Activated CD4-positive, alpha-beta memory T cell treated with anti-CD3 and anti-CD28 coated beads for 36 hours (primary cell): ENCODE measurements at regions of chr5 and their contacts with region 1.

Region 1: DNA sequence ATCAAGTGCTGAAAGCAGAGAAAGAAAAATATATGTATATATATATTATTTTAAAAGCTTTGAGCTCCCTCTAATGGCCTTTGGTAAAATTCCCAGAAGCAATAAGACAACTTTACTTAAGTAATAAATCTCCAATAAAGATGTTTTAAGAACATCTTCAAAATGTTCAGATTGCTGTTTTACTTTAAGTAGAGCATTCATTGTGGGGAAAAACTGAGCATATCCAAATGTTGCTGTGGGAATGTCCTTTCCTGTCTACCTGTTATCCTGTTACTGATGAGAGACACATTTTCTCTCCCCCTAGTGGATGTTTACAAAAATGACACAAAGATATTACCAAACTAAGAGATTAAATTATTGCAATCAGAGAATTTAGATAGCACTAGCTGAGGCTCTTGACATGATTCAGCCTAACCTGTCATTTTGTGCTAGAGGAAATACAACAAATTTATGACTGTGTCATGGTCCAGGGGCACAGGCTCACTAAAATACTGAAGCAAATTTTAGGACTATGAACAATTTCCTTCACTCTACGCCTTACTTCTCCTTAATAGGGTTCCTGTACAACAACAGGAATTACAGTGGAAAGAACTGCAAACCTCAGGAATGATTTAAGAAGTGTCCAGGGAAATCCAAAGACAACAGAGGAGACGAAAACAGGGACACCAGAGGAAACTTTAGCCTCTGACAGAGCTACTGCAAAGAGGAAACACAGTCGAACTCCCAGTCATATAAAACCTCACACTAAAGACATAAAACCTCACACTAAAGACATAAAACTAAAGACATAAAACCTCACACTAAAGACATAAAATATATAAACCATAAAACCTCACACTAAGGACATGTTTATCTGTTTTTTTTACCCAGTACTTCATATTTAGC is 24.3 kb upstream of the PRRC1 start:
- DNase-seq: no peak
- H3K4me3 Mint-ChIP-seq: no peak overlapping the region
- H3K27ac Mint-ChIP-seq: no peak overlapping the region
- H3K4me1 Mint-ChIP-seq: no peaks in the 10 kb centered on the region
- H3K27me3 Mint-ChIP-seq: peaks cover 5% of the 10 kb centered on the region

Region 2: DNA sequence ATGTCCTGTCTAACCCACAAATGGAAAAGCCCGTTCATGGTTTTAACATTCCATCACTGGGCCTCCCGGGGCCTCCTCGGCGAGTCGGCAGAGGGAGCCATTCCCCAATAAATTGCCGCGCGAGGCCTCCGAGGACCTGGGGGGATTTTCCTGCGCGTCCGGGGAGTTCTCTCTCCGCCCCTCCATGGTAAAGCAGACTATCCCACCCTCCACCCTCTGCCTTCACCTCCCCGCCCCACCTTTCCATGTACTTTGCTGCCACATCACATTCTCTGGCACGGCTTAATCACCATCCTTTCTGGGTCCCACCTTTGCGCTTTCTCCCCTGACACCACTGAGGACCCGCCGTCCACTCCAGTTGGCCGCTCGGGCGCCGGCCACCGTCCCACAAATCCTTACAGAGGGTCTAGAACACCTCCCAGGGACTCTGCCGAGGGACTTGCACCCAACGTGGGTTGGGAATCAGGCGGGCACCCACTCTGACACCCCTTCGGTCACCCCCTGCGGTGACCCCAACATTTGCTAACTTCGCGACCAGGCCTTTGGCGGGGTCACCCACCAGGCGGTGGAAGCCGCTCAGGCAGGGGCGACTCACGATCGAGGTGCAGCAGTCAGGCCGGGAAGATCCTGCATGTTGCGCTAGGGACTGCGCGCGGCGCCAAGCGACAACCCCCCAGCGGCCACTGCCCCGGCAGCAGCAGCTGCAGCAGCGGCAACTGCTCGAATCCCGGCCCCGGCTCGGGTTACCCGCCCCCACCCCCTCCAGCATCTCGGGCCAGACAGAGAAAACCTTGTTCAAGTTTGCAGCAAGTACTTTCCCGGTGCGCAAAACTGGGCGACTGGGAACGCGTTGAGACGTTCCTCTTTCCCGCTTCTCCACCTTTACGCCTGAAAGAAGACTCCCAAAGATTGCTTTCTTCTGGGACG is 202.8 kb before region 1 on chr5 and contains the start of gene MEGF10:
- CTCF ChIA-PET with region 1: interaction called, 4 read pairs
- POLR2A ChIA-PET with region 1: no interaction called
- intact Hi-C with region 1: loop called (anchors 1 kb)
- DNase-seq: peak; percentile 31
- H3K4me3 Mint-ChIP-seq: no peak within 1 kb of the TSS
- H3K27ac Mint-ChIP-seq: no peak within 1 kb of the TSS
- H3K4me1 Mint-ChIP-seq: peaks cover 9% of the 10 kb centered on the region
- H3K27me3 Mint-ChIP-seq: peaks cover 42% of the 10 kb centered on the region
- total RNA-seq, gene MEGF10: not detected

Region 3: GRCh38 chr5:127472686-127473085 is 20.4 kb before region 1 on chr5:
- CTCF ChIA-PET with region 1: interaction called, 10 read pairs
- POLR2A ChIA-PET with region 1: no interaction called
- intact Hi-C with region 1: no loop called
- DNase-seq: no peak
- H3K4me3 Mint-ChIP-seq: no peak overlapping the region
- H3K27ac Mint-ChIP-seq: no peak overlapping the region
- H3K4me1 Mint-ChIP-seq: no peaks in the 10 kb centered on the region
- H3K27me3 Mint-ChIP-seq: peaks cover 15% of the 10 kb centered on the region

Region 4: DNA sequence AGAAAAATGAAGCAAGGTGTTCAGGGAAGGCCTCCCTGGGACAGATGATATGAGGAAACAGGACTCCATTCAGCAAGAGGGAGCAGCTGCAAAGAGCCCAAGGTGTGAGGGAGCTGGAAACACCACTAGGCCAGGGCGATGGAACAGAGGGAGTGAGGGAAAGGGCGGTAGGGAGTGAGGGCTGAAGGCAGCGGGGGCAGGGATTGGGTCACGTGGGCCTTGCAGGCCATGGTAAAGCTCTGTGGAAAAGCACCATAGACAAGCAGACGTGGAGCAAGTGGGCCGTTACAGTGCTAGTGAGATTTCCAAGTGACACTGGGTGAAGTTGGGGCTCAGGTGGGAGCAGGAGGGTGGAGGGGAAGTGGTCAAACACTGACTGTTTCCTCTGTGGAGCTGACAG is 13.5 kb after region 1 on chr5:
- CTCF ChIA-PET with region 1: interaction called, 14 read pairs
- POLR2A ChIA-PET with region 1: no interaction called
- intact Hi-C with region 1: no loop called
- DNase-seq: no peak
- H3K4me3 Mint-ChIP-seq: no peak overlapping the region
- H3K27ac Mint-ChIP-seq: no peak overlapping the region
- H3K4me1 Mint-ChIP-seq: no peaks in the 10 kb centered on the region
- H3K27me3 Mint-ChIP-seq: peaks cover 12% of the 10 kb centered on the region